ENCODE measurements at regions of chr3 and their contacts with region 1.

Region 1: GRCh38 chr3:176526225-176526624 is 671.1 kb downstream of the TBL1XR1 start:
- DNase-seq: no peak
- H3K4me3 ChIP-seq: no peak overlapping the region
- H3K27ac ChIP-seq: no peak overlapping the region
- H3K4me1 ChIP-seq: no peaks in the 10 kb centered on the region
- H3K27me3 ChIP-seq: no peaks in the 10 kb centered on the region
- CTCF ChIP-seq: no peak

Region 2: GRCh38 chr3:176328198-176328597 is 198.0 kb before region 1 on chr3:
- CTCF ChIA-PET with region 1: no interaction called
- POLR2A ChIA-PET with region 1: no interaction called
- intact Hi-C with region 1: no loop called
- DNase-seq: no peak
- H3K4me3 ChIP-seq: no peak overlapping the region
- H3K27ac ChIP-seq: no peak overlapping the region
- H3K4me1 ChIP-seq: no peaks in the 10 kb centered on the region
- H3K27me3 ChIP-seq: no peaks in the 10 kb centered on the region
- CTCF ChIP-seq: no peak

Region 3: GRCh38 chr3:176469694-176470205 is 56.5 kb before region 1 on chr3:
- CTCF ChIA-PET with region 1: no interaction called
- POLR2A ChIA-PET with region 1: no interaction called
- intact Hi-C with region 1: no loop called
- DNase-seq: peak; percentile 62 to 67
- H3K4me3 ChIP-seq: no peak overlapping the region
- H3K27ac ChIP-seq: no peak overlapping the region
- H3K4me1 ChIP-seq: 0 out of 2 replicates have a peak, but pooled peaks cover 4% of the 10 kb centered on the region
- H3K27me3 ChIP-seq: no peaks in the 10 kb centered on the region
- CTCF ChIP-seq: no peak

Region 4: DNA sequence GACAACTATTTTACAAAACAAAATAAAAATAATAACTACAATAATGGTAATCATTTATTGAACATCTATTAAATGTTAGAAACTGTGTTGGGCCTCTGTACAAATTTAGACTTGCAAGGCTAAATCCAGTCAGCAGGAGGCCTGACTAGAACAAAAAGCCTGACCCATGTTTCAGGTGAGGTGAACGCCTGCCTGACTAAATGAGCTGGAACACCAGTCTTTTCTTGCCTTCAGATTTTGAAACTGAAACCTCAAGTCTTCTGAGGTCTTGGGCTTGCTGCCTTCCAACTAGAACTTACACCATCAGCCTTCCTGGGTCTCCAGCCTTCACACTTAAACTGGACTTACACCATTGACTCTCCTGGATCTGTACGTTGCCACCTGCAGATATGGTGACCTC is 35.9 kb before region 1 on chr3:
- CTCF ChIA-PET with region 1: no interaction called
- POLR2A ChIA-PET with region 1: no interaction called
- intact Hi-C with region 1: loop called (anchors 1 kb)
- DNase-seq: no peak
- H3K4me3 ChIP-seq: no peak overlapping the region
- H3K27ac ChIP-seq: no peak overlapping the region
- H3K4me1 ChIP-seq: no peaks in the 10 kb centered on the region
- H3K27me3 ChIP-seq: no peaks in the 10 kb centered on the region
- CTCF ChIP-seq: no peak

Region 5: DNA sequence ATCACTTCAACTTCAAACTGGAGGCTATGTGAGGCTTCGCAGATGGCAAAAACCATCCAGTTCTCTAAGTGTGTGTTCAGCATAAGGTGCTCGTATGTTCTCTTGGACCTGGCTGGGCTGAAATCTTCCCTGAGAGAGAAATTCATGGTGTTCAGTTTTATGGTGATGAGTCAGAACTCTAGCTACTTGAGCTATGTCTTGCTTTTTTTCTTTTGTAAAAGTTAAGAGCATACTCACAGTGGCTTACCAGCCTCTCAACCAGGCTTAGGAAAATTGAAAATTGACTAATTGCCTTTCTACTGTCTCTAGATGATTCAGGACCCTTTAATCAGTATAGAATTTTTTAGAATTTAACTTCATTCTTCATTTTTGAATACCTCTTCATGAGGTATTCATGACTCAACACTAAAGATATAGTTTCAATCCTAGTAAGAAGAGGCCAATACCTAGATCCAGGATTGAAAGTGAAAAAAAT is 53.5 kb after region 1 on chr3:
- CTCF ChIA-PET with region 1: no interaction called
- POLR2A ChIA-PET with region 1: no interaction called
- intact Hi-C with region 1: no loop called
- DNase-seq: no peak
- H3K4me3 ChIP-seq: no peak overlapping the region
- H3K27ac ChIP-seq: no peak overlapping the region
- H3K4me1 ChIP-seq: no peaks in the 10 kb centered on the region
- H3K27me3 ChIP-seq: no peaks in the 10 kb centered on the region
- CTCF ChIP-seq: no peak

Measured in PC-9 (cell line).